K562 (cell line): ENCODE measurements at regions of chr1 and their contacts with region 1.

Region 1: DNA sequence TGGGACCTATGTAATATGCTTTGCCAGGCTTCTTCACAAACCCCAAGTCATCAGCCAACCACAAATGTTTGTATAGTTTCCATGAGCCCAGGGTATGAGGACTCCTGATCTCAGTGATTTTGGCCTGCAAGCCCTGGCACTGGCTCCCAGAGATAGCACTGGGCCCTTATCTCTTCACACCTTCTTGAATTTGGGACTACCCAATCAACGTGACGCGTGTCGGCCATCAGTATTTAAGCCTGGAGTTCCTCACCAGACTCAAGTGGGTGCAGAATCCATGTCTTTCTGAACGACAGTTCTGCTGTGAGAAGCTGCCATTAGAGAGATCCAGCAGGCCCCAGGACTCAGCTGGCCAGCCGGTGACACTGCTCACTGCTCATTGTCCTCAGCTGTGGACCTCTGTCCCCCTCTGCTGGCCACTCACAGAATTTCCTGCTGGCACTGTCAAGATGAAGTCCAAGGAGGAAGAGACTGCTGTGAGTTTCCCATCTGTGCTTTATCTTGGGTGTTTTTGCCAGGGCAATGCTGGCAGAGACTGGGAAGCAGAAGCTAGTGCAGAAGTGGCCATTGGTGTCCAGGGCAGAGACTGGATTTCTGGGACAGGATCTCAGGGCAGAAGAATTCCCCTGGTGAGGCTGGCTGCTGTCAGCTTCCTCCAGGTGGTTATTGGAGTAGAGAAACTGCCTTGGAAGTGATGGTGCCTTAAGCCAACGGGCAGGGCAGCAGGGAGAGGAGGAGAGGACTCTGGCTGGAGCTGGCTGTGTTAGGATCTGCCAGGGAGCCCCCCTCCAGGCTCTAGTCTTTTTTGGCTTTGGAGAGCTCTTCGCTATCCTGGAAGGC is 28.4 kb downstream of the TMCC2 start:
- DNase-seq: peak; percentile 87 to 91 (median 90)
- ATAC-seq: peak; percentile 94
- H3K4me3 ChIP-seq: no peak overlapping the region
- H3K27ac ChIP-seq: no peak overlapping the region
- H3K4me1 ChIP-seq: peaks cover 12 to 27% of the 10 kb centered on the region in 2 experiments
- H3K27me3 ChIP-seq: peaks cover 0 to 4% of the 10 kb centered on the region in 2 experiments; a peak in 1 of 5 replicates
- CTCF ChIP-seq: peak; percentile 97 to 100 (median 99)
- EP300 ChIP-seq: peak; percentile 85
- POLR2A ChIP-seq: no peak
- RAD21 ChIP-seq: peak; percentile 99 to 100

Region 2: DNA sequence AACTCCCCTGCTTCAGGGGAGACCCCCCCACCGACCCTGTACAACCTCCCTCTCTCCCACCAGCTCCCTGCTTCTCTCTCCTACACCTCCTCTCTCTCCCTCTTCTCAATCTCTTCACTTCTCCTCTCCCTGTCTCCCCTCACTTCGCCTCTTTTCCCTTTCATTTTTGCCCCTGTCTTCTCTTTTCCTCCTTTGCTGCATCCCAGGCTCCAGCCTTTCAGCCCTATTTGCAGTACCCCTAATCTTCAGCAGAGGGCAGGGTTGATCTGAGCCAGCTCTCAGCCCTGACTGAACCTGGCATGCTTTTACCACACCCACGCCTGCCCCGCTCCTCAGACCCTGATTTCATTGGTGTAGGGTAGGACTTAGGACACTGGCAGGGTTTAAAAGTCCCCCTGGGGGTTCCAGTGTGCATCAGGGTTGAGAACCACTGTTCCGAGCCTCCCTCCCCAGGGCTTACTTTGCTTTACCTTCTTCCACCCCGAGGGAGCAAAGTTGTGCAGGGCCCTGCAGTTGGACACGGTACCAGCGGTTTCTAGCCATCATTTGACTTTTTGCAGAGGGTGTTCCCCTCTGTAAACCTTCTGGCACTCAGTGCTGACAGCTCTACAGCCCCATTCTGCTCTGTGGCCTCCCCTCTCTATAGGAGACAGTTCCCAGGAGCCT is 280.5 kb before region 1 on chr1:
- CTCF ChIA-PET with region 1: interaction called, 21 read pairs
- POLR2A ChIA-PET with region 1: interaction called, 6 read pairs
- in situ Hi-C with region 1: loop called (anchors 5 kb)
- intact Hi-C with region 1: no loop called
- DNase-seq: peak; percentile 66 to 86 (median 83)
- ATAC-seq: peak; percentile 90
- H3K4me3 ChIP-seq: no peak overlapping the region
- H3K27ac ChIP-seq: no peak overlapping the region
- H3K4me1 ChIP-seq: peaks cover 4 to 12% of the 10 kb centered on the region in 2 experiments; a peak in 3 of 5 replicates
- H3K27me3 ChIP-seq: peaks cover 34 to 74% of the 10 kb centered on the region in 2 experiments
- CTCF ChIP-seq: peak; percentile 85 to 93 (median 90)
- EP300 ChIP-seq: no peak
- POLR2A ChIP-seq: no peak
- RAD21 ChIP-seq: peak; percentile 81 to 93

Region 3: GRCh38 chr1:205061665-205062069 is 194.5 kb before region 1 on chr1:
- CTCF ChIA-PET with region 1: no interaction called
- POLR2A ChIA-PET with region 1: interaction called, 4 read pairs
- in situ Hi-C with region 1: no loop called
- intact Hi-C with region 1: loop called (anchors 1 kb)
- DNase-seq: peak; percentile 80 to 85 (median 82)
- ATAC-seq: peak; percentile 85
- H3K4me3 ChIP-seq: no peak overlapping the region
- H3K27ac ChIP-seq: no peak overlapping the region
- H3K4me1 ChIP-seq: peaks cover 0 to 23% of the 10 kb centered on the region in 2 experiments; a peak in 3 of 5 replicates
- H3K27me3 ChIP-seq: peaks cover 39 to 75% of the 10 kb centered on the region in 2 experiments
- CTCF ChIP-seq: peak; percentile 92 to 98 (median 95)
- EP300 ChIP-seq: no peak
- POLR2A ChIP-seq: no peak
- RAD21 ChIP-seq: peak; percentile 82 to 95

Region 4: DNA sequence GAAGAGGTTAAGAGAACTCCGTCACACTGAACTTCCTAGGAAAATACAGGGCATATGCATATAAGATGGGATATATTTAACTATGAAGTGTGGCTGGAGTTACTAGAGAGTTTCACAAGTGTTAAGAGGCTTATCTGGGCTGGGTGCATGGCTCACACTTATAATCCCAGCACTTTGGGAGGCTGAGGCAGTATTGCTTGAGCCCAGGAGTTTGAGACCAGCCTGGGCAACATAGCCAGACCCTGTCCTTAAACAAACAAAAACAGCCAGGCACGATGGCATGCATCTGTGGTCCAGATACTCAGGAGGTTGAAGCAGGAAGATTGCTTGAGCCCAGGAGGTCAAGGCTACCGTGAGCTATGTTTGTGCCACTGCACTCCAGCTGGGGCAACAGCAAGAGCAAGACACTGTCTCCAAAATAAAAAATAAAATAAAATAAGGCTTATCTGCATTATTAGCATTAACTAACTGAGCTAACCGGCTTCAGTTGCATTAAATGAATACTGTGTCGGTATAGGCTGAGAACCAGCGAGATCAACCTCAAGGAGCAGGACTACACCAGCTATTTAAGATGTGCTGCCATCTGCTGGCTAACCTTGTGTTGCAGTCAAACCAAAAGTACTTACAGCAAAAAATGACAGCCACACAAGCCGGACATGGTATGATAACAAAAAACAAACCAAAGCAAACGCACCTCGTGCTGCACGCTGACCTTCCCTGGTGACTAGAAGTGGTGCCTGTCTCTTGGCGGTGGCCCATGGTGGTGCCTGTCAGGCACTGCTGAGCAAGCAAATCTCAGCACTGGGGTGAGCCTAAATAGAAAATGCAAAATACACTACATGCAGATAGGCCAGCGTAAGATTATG is 114.7 kb before region 1 on chr1:
- CTCF ChIA-PET with region 1: interaction called, 3 read pairs
- POLR2A ChIA-PET with region 1: interaction called, 4 read pairs
- in situ Hi-C with region 1: no loop called
- intact Hi-C with region 1: loop called (anchors 5 kb)
- DNase-seq: peak; percentile 77 to 91 (median 79)
- ATAC-seq: peak; percentile 94
- H3K4me3 ChIP-seq: no peak overlapping the region
- H3K27ac ChIP-seq: no peak overlapping the region
- H3K4me1 ChIP-seq: peaks cover 3 to 7% of the 10 kb centered on the region in 2 experiments; a peak in 3 of 5 replicates
- H3K27me3 ChIP-seq: no peaks in the 10 kb centered on the region
- CTCF ChIP-seq: peak; percentile 87 to 92 (median 92)
- EP300 ChIP-seq: no peak
- POLR2A ChIP-seq: no peak
- RAD21 ChIP-seq: peak; percentile 65 to 83

Region 5: DNA sequence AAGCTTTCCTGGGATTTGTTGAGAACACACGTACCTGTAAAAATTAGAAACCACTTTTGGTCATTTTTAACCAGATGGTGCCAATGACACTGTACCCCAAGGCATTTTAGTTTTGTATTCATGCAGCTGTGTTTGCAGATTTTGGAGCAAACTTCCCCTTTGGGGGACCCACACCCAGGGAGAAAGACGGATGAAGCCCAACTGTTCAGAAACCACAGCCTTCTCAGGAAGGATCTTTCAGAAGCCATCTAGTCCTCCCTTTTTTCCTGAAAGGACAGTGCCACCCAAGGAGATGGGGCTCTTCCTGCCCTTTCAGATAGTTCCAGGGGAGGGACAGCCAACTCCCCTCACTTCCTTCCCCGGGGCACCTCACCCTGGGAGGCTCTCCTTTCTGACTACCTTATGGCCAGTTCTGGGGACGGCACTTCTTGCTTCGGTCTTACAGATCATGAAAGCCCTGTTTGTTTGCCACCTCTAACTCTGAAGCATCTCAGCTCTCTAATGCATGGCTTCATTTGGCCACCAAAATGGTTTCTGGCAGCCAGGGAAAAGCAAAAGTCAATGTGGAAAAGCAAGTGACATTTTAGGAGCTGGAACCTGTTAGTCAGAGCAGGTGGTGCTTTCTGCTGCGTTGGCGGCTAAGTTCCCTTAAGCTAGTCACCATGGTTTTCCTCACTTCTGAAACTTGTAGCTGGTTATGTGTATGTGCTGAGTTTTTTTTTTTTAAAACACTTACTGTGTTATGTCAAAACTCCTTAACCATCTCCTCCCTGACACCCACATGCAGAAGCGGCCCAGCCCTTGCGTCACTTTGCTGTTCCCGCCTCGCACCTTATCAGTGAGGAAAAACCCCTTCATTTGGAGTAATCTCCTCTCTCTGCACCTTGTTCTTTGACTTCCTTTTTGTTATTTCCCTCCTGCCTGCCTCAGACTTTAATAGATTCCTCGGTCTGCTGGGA is 18.4 kb before region 1 on chr1:
- CTCF ChIA-PET with region 1: no interaction called
- POLR2A ChIA-PET with region 1: interaction called, 21 read pairs
- in situ Hi-C with region 1: no loop called
- intact Hi-C with region 1: no loop called
- DNase-seq: peak; percentile 60 to 81 (median 68)
- ATAC-seq: peak; percentile 80
- H3K4me3 ChIP-seq: no peak overlapping the region
- H3K27ac ChIP-seq: no peak overlapping the region
- H3K4me1 ChIP-seq: peaks cover 17 to 23% of the 10 kb centered on the region in 2 experiments
- H3K27me3 ChIP-seq: peaks cover 0 to 10% of the 10 kb centered on the region in 2 experiments; a peak in 1 of 5 replicates
- CTCF ChIP-seq: no peak
- EP300 ChIP-seq: peak; percentile 57; the same call in 1 of the 2 replicates
- POLR2A ChIP-seq: no peak
- RAD21 ChIP-seq: no peak

Region 6: GRCh38 chr1:205273551-205273982 is 17.4 kb after region 1 on chr1:
- CTCF ChIA-PET with region 1: no interaction called
- POLR2A ChIA-PET with region 1: interaction called, 15 read pairs
- in situ Hi-C with region 1: no loop called
- intact Hi-C with region 1: no loop called
- DNase-seq: peak; percentile 88 to 92 (median 90)
- ATAC-seq: peak; percentile 94
- H3K4me3 ChIP-seq: no peak overlapping the region
- H3K27ac ChIP-seq: no peak overlapping the region
- H3K4me1 ChIP-seq: peaks cover 6 to 29% of the 10 kb centered on the region in 2 experiments
- H3K27me3 ChIP-seq: peaks cover 1 to 13% of the 10 kb centered on the region in 2 experiments; a peak in 4 of 5 replicates
- CTCF ChIP-seq: peak; percentile 96 to 99 (median 98)
- EP300 ChIP-seq: 0 out of 2 replicates have a peak, but pooled peaks have one; percentile 12
- POLR2A ChIP-seq: no peak
- RAD21 ChIP-seq: peak; percentile 99